ENCODE measurements at regions of chr3 and their contacts with region 1.

Region 1: GRCh38 chr3:30970183-30970582 is 75.7 kb upstream of the GADL1 start:
- DNase-seq: no peak
- ATAC-seq: peak; percentile 46; the same call in 1 of the 3 replicates
- H3K4me3 ChIP-seq: no peak overlapping the region
- H3K27ac ChIP-seq: no peak overlapping the region
- H3K4me1 ChIP-seq: no peaks in the 10 kb centered on the region
- H3K27me3 ChIP-seq: no peaks in the 10 kb centered on the region
- CTCF ChIP-seq: peak; percentile 15 to 46 (median 24); a peak in 4 of 6 replicates
- EP300 ChIP-seq: no peak
- POLR2A ChIP-seq: no peak
- RAD21 ChIP-seq: peak; percentile 49; the same call in 1 of the 2 replicates

Region 2: GRCh38 chr3:30934208-30934550 is 36.0 kb before region 1 on chr3:
- CTCF ChIA-PET with region 1: interaction called, 4 read pairs
- POLR2A ChIA-PET with region 1: no interaction called
- RAD21 ChIA-PET with region 1: interaction called, 3 read pairs
- SMC1A ChIA-PET with region 1: interaction called, 12 read pairs
- in situ Hi-C with region 1: no loop called
- intact Hi-C with region 1: no loop called
- DNase-seq: no peak
- ATAC-seq: peak; percentile 72
- H3K4me3 ChIP-seq: no peak overlapping the region
- H3K27ac ChIP-seq: no peak overlapping the region
- H3K4me1 ChIP-seq: no peaks in the 10 kb centered on the region
- H3K27me3 ChIP-seq: no peaks in the 10 kb centered on the region
- CTCF ChIP-seq: peak; percentile 35 to 54 (median 35); a peak in 4 of 6 replicates
- EP300 ChIP-seq: no peak
- POLR2A ChIP-seq: no peak
- RAD21 ChIP-seq: peak; percentile 74

Region 3: DNA sequence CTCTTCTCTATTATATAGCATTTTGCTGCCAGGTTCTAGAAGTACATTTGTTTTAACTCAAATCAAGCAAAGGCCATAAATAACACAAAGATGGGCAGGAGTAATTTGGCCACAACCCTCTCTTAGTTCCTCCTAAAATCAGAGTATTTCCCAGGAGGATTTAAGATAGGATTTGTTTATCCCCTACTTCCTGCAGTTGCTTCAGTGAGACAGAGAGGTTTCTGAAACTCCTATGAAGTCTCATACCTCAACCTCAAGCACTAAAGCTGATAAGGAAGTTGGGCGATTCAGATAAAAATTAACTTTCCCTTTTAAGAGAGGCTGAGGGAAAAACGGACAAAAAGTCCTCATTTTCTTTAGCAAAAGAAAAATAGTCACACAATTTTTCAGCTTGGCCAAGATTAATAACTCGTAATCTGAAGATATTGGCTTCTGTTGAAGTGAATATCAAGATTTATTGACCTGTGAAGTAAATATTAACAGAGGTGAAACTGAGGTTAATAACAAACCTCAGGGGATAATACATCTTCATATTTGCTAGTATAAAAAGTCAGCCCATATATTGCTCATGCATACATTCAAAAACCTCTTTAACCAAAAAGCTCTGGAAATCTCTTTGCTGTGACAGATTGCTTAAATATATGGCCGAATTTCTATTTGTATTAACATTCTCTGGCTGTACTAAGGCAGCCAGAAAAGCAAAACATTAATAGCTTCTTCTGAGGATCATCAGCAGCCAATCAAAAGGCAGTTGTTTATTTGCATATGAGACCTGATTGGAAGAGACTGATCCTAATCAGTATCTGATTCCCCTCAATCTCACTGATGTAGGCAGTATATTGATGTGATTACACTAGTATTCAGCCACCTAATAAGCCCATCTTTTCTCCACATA is 14.9 kb after region 1 on chr3:
- CTCF ChIA-PET with region 1: interaction called, 5 read pairs
- POLR2A ChIA-PET with region 1: no interaction called
- RAD21 ChIA-PET with region 1: interaction called, 3 read pairs
- SMC1A ChIA-PET with region 1: interaction called, 31 read pairs
- in situ Hi-C with region 1: no loop called
- intact Hi-C with region 1: no loop called
- DNase-seq: no peak
- ATAC-seq: peak; percentile 73
- H3K4me3 ChIP-seq: no peak overlapping the region
- H3K27ac ChIP-seq: 0 out of 2 replicates have a peak overlapping the region, but pooled peaks have one; percentile 6
- H3K4me1 ChIP-seq: 0 out of 2 replicates have a peak, but pooled peaks cover 3% of the 10 kb centered on the region
- H3K27me3 ChIP-seq: no peaks in the 10 kb centered on the region
- CTCF ChIP-seq: no peak
- EP300 ChIP-seq: no peak
- POLR2A ChIP-seq: no peak
- RAD21 ChIP-seq: no peak

Region 4: DNA sequence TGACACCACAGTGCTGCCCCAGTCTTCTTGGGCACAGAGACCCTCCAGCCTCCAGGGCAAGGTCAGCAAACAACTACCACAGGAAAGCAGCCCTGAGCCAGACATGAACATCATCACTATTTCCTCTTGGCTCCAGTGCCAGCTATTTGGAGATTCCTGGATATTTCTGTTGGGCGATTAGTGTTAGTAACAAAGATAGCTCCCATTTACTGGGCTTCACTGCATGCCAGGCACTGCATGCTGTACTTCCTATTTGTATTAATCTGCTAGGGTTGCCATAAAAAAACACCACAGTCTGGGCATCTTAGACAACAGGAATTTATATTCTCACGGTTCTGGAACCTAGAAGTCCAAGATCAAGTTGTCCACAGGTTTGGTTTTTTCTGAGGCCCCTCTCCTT is 307.4 kb after region 1 on chr3:
- CTCF ChIA-PET with region 1: no interaction called
- POLR2A ChIA-PET with region 1: no interaction called
- RAD21 ChIA-PET with region 1: no interaction called
- SMC1A ChIA-PET with region 1: no interaction called
- in situ Hi-C with region 1: no loop called
- intact Hi-C with region 1: no loop called
- DNase-seq: no peak
- ATAC-seq: no peak
- H3K4me3 ChIP-seq: no peak overlapping the region
- H3K27ac ChIP-seq: no peak overlapping the region
- H3K4me1 ChIP-seq: no peaks in the 10 kb centered on the region
- H3K27me3 ChIP-seq: no peaks in the 10 kb centered on the region
- CTCF ChIP-seq: no peak
- EP300 ChIP-seq: no peak
- POLR2A ChIP-seq: no peak
- RAD21 ChIP-seq: no peak

Measured in GM12878 (cell line).